Activated CD4-positive, alpha-beta T cell treated with anti-CD3 and anti-CD28 coated beads, Interleukin-2, amount 10 ng/mL, durations not matched to agents 24 days and 14 days (primary cell): ENCODE measurements at regions of chr17 and their contacts with region 1.

Region 1: DNA sequence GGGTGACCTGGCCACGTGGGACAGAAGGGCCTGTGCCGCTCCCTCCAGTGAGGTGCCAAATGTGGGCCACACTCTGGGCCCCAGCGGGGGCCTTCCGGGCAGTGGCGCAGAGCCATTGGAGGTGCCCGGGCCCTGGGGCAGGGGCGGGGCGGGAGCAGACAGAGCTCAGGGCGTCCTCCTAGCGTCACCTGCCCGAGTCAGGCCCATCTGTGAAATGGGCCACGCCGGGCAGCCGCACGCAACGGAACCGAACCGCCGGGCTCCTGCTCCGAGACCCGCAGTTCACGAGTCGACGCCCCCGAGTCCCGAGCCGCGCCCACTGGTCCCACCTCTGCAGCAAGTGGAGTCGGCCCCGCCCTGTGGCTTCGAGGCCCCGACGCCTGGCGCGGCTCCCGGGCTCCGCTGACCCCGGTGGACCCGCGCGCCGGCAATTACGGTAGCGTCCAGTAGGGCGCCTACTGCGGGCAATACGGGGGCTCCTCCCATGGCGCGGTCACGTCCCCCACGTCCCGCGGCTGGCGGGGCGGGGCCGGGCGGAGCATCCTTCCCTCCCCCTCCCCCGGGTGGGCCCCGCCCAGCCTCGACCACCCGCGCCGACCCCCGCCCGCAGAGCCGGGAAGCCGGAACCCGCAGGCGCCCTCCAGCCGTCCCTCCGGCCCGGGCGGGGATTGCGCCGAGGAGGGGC is 1.9 kb downstream of the SLC16A3 start:
- DNase-seq: peak; percentile 92
- H3K4me3 Mint-ChIP-seq: peak overlapping the region; percentile 96
- H3K27ac Mint-ChIP-seq: no peak overlapping the region
- H3K4me1 Mint-ChIP-seq: peaks cover 8% of the 10 kb centered on the region
- H3K27me3 Mint-ChIP-seq: no peaks in the 10 kb centered on the region

Region 2: DNA sequence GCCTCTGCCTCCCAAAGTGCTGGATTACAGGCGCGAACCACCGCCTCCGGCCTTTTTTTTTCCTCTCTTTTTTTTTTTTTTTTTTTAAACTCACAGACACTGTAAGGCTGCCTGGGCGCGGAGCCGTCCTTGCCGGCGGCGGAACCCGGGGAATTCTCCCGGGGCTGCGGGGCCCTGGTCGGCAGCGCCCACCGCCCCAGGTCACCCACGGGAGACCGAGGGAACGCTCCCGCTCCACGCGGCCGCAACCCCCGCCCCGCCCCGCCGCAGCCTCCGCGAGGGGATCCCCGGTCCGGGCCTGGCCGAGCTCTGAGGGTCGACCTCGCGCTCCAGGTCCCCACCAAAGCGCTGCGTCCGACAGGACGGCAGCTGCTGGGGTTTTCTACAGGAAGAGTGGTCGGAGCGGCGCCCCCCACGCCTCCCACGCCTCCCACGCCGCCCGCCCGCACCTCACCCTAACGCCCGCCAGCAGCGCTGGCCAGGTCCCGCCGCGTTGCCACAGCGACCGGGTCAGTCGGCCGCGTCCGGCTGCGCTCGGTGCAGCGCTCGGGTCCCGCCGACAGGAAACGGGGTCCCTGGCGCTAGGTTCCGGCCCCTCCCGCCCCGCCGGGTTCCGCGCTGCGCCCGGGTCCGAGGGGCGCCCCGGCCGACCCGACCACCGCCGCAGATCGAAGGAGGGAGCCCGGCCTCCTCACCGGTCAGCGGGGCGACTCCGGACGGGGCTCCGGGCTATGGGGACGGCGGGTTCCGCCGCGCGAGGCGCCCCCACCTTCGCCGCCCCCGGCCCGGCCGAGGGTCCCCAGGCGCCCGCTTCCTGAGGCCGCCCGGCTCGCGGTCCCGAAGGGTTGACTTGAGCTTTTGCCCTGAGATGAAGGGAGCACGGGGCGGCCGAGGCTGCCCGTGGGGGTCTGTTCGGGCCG is 18.2 kb before region 1 on chr17 and contains the start of gene CCDC57:
- intact Hi-C with region 1: loop called (anchors 2 kb)
- DNase-seq: peak; percentile 93
- H3K4me3 Mint-ChIP-seq: peak within 1 kb of the TSS; percentile 82
- H3K27ac Mint-ChIP-seq: peak within 1 kb of the TSS; percentile 91
- H3K4me1 Mint-ChIP-seq: peaks cover 37% of the 10 kb centered on the region
- H3K27me3 Mint-ChIP-seq: no peaks in the 10 kb centered on the region
- total RNA-seq, gene CCDC57: 56.0 and 58.4 TPM in 2 replicates